ENCODE measurements at regions of chr3 and their contacts with region 1.

Region 1: DNA sequence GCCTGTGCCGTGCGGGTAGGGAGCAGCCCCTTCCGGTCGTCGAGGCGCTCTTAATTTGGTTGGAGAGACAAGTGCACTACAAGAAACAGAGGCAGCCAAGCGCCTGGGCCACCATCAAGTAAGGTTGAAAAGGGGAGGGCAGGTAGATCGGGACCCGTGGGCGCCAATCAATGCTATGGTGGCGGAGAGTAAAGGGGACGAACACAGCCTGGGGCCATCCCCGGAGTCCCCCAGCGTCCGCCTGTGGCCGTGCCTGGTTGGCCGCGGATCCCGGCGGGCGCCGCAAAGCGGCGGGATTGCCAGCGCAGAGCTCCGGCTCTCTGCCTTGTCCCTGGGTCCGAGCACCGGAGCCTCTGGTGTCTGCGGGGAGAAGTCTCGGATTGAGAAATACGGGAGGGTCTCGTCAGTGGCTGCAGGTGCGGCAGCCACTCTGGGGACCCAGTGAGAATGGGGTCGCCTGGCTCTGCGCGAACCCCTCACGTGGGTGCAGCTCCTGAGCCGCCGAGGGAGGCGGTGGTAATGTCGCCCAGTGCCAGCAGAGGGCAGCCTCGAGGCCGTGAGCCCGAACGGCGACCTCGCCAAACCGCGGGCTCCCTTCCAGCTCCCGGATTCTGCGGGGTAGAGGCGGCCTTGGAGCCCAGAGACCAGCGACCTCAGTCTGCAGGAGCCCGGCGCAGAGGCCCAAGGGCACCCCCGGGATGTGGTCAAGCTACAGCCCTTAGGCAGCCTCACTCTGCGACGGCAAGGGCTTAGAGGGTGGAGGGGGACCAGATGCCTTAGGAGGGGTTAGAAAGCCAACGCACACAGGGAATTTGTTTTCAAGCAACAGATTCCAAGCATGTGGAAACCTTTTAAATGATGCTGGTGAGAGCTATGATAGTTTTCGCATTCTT is 10.8 kb downstream of the FOXL2 start:
- DNase-seq: peak; percentile 67
- ATAC-seq: peak; percentile 77
- H3K4me3 Mint-ChIP-seq: peak overlapping the region; percentile 52
- H3K27ac Mint-ChIP-seq: no peak overlapping the region
- H3K4me1 Mint-ChIP-seq: peaks cover 24% of the 10 kb centered on the region
- H3K27me3 Mint-ChIP-seq: peaks cover 86% of the 10 kb centered on the region

Region 2: DNA sequence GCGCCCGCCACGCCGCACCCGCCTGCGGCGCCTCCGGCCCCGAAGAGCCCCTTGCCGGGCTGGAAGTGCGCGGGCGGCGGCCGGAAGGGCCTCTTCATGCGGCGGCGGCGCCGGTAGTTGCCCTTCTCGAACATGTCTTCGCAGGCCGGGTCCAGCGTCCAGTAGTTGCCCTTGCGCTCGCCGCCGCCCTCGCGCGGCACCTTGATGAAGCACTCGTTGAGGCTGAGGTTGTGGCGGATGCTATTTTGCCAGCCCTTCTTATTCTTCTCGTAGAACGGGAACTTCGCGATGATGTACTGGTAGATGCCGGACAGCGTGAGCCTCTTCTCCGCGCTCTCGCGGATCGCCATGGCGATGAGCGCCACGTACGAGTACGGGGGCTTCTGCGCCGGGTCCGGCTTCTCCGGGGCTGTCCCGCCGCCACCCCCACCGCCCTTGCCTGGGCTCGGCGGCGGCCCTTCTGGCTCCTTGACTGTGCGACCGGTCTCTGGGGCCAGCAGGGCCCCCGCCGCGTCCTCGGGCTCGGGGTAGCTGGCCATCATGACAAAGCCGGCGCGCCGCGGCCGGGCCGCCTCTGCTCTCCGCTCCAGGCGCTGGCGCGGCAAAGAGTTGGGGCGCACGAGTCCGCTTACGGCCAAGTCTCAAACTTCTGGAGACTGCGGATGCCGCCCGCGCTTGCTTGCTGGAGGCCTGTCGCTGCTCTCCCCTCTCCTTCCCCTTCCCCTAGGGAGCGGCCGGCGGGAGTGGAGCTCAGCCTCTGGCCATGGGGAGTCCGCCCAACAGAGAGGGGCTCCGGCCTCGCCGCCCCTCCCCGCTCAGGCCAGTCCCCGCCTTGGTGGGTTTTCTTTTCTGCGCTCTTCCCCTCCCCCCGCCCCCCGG is 10.3 kb after region 1 on chr3:
- CTCF ChIA-PET with region 1: interaction called, 45 read pairs
- DNase-seq: no peak
- ATAC-seq: peak; percentile 11
- H3K4me3 Mint-ChIP-seq: peak overlapping the region; percentile 41
- H3K27ac Mint-ChIP-seq: peak overlapping the region; percentile 46
- H3K4me1 Mint-ChIP-seq: peaks cover 31% of the 10 kb centered on the region
- H3K27me3 Mint-ChIP-seq: peaks cover 87% of the 10 kb centered on the region

Region 3: GRCh38 chr3:139062915-139063314 is 126.8 kb after region 1 on chr3:
- CTCF ChIA-PET with region 1: no interaction called
- DNase-seq: no peak
- ATAC-seq: no peak
- H3K4me3 Mint-ChIP-seq: no peak overlapping the region
- H3K27ac Mint-ChIP-seq: no peak overlapping the region
- H3K4me1 Mint-ChIP-seq: no peaks in the 10 kb centered on the region
- H3K27me3 Mint-ChIP-seq: peaks cover 2% of the 10 kb centered on the region

Measured in activated CD8-positive, alpha-beta memory T cell treated with anti-CD3 and anti-CD28 coated beads, Interleukin-2, amount 10 ng/mL, durations not matched to agents 7 days and 5 days (primary cell).